Activated B cell treated with CpG ODN at 0.5 μM for 24 hours (primary cell): ENCODE measurements at regions of chr4 and their contacts with region 1.

Region 1: GRCh38 chr4:77862478-77863216 is at the start of gene MRPL1:
- DNase-seq: peak; percentile 72
- ATAC-seq: peak; percentile 86
- H3K4me3 Mint-ChIP-seq: peak within 1 kb of the TSS; percentile 97
- H3K27ac Mint-ChIP-seq: peak within 1 kb of the TSS; percentile 100
- H3K4me1 Mint-ChIP-seq: peaks cover 47% of the 10 kb centered on the region
- H3K27me3 Mint-ChIP-seq: no peaks in the 10 kb centered on the region
- CTCF ChIP-seq: no peak
- total RNA-seq, gene MRPL1: 31.7 and 38.3 TPM in 2 replicates

Region 2: GRCh38 chr4:77481856-77482255 is 380.8 kb before region 1 on chr4:
- CTCF ChIA-PET with region 1: no interaction called
- POLR2A ChIA-PET with region 1: no interaction called
- intact Hi-C with region 1: no loop called
- DNase-seq: no peak
- ATAC-seq: no peak
- H3K4me3 Mint-ChIP-seq: no peak overlapping the region
- H3K27ac Mint-ChIP-seq: no peak overlapping the region
- H3K4me1 Mint-ChIP-seq: peaks cover 3% of the 10 kb centered on the region
- H3K27me3 Mint-ChIP-seq: no peaks in the 10 kb centered on the region
- CTCF ChIP-seq: no peak

Region 3: GRCh38 chr4:77734928-77735327 is 127.7 kb before region 1 on chr4:
- CTCF ChIA-PET with region 1: no interaction called
- POLR2A ChIA-PET with region 1: interaction called, 6 read pairs
- intact Hi-C with region 1: loop called (anchors 5 kb)
- DNase-seq: no peak
- ATAC-seq: peak; percentile 71
- H3K4me3 Mint-ChIP-seq: no peak overlapping the region
- H3K27ac Mint-ChIP-seq: peak overlapping the region; percentile 57
- H3K4me1 Mint-ChIP-seq: peaks cover 42% of the 10 kb centered on the region
- H3K27me3 Mint-ChIP-seq: no peaks in the 10 kb centered on the region
- CTCF ChIP-seq: no peak

Region 4: GRCh38 chr4:77782102-77782835 is 80.4 kb before region 1 on chr4:
- CTCF ChIA-PET with region 1: interaction called, 3 read pairs
- POLR2A ChIA-PET with region 1: interaction called, 12 read pairs
- intact Hi-C with region 1: no loop called
- DNase-seq: no peak
- ATAC-seq: no peak
- H3K4me3 Mint-ChIP-seq: no peak overlapping the region
- H3K27ac Mint-ChIP-seq: no peak overlapping the region
- H3K4me1 Mint-ChIP-seq: peaks cover 57% of the 10 kb centered on the region
- H3K27me3 Mint-ChIP-seq: no peaks in the 10 kb centered on the region
- CTCF ChIP-seq: no peak

Region 5: DNA sequence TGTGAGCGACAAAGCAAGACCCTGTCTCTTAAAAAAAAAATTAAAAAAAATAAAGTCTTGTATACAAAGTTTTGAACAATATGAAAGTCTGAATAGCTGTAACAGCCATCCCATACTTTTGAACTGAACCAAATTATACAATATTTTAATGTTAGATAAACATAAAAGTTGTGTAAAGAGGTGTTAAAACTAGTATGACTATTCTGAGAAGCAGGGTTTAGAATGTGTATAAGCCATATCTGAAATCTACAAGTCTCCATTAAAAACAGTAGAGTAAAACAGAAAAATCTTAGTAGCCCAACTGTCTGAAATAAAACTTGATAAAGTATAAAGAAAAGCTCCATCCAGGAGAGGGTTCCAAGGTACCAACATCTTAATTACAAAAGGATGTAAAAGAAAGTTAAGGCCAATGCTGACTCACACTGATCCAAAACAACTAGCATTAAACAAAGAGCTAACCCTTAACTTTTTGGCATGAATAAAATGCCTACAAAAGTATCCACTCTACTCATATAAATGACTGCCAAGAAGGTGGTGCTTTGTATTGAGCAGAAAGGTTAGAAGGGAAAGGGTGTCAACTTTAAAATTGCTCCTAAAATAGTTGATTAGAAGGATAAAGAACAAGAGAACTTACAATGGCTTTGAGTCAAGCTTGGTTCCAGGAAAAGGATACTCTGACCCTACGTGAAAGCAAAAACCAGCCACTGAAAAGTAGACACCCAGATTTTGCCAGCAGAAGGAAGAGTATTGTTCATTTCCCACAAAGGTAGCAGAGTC is 62.0 kb before region 1 on chr4:
- CTCF ChIA-PET with region 1: interaction called, 4 read pairs
- POLR2A ChIA-PET with region 1: interaction called, 12 read pairs
- intact Hi-C with region 1: no loop called
- DNase-seq: no peak
- ATAC-seq: no peak
- H3K4me3 Mint-ChIP-seq: peak overlapping the region; percentile 17
- H3K27ac Mint-ChIP-seq: peak overlapping the region; percentile 39
- H3K4me1 Mint-ChIP-seq: peaks cover 60% of the 10 kb centered on the region
- H3K27me3 Mint-ChIP-seq: no peaks in the 10 kb centered on the region
- CTCF ChIP-seq: no peak

Region 6: GRCh38 chr4:77827343-77827742 is 35.3 kb before region 1 on chr4:
- CTCF ChIA-PET with region 1: interaction called, 6 read pairs
- POLR2A ChIA-PET with region 1: interaction called, 417 read pairs
- intact Hi-C with region 1: no loop called
- DNase-seq: no peak
- ATAC-seq: peak; percentile 49
- H3K4me3 Mint-ChIP-seq: peak overlapping the region; percentile 46
- H3K27ac Mint-ChIP-seq: peak overlapping the region; percentile 57
- H3K4me1 Mint-ChIP-seq: peaks cover 41% of the 10 kb centered on the region
- H3K27me3 Mint-ChIP-seq: no peaks in the 10 kb centered on the region
- CTCF ChIP-seq: no peak